ENCODE measurements at regions of chr1 and their contacts with region 1.

Region 1: GRCh38 chr1:188027613-188028012 is 1198.9 kb downstream of the PLA2G4A start:
- DNase-seq: peak; percentile 1 to 48
- H3K4me3 ChIP-seq: no peak overlapping the region
- H3K27ac ChIP-seq: no peak overlapping the region
- H3K4me1 ChIP-seq: peaks cover 4% of the 10 kb centered on the region; the same call in 1 of the 2 replicates
- H3K27me3 ChIP-seq: no peaks in the 10 kb centered on the region
- CTCF ChIP-seq: no peak

Region 2: GRCh38 chr1:187862554-187862953 is 165.1 kb before region 1 on chr1:
- CTCF ChIA-PET with region 1: no interaction called
- POLR2A ChIA-PET with region 1: no interaction called
- intact Hi-C with region 1: no loop called
- DNase-seq: peak in 1 of 2 experiments; percentile 41
- H3K4me3 ChIP-seq: no peak overlapping the region
- H3K27ac ChIP-seq: no peak overlapping the region
- H3K4me1 ChIP-seq: peaks cover 6% of the 10 kb centered on the region
- H3K27me3 ChIP-seq: no peaks in the 10 kb centered on the region
- CTCF ChIP-seq: no peak

Region 3: DNA sequence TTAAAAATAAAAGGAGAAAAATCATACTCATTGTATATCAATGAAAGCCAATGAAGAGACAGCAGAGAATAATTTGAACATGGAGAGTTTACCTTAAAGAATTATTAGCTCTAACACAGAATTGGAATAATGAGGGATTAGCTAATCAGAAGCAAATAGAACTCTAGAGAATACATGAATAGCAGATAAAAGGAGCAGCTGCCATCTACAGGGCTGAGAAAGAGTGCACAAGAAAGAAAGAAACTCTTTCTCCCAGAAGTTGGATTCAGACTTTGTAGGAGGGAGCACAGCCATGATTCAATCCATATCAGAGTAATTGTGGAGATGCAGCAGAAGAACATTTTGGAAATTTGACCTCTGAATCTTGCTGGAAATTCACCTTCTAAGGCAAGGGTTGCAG is 27.6 kb before region 1 on chr1:
- CTCF ChIA-PET with region 1: no interaction called
- POLR2A ChIA-PET with region 1: interaction called, 28 read pairs
- intact Hi-C with region 1: no loop called
- DNase-seq: no peak
- H3K4me3 ChIP-seq: no peak overlapping the region
- H3K27ac ChIP-seq: no peak overlapping the region
- H3K4me1 ChIP-seq: no peaks in the 10 kb centered on the region
- H3K27me3 ChIP-seq: no peaks in the 10 kb centered on the region
- CTCF ChIP-seq: no peak

Region 4: DNA sequence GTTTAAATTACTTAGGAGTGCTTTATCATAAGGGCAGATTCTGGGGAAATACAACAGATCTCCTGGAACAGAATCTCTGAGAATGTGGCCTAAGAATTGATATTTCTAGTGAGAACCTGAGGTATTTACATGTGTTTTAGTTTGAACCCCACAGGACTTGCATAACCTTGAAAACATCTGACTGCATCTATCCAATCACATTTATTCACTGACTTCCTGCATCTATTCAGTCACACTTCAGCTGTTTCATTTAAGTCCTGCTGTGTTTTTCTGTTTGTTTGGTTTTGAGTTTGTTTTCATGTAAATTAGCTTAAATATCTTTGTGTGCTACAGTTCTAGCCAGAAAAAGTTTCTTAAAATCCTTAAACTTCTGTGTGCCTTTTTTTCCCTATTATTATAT is 61.8 kb after region 1 on chr1:
- CTCF ChIA-PET with region 1: no interaction called
- POLR2A ChIA-PET with region 1: no interaction called
- intact Hi-C with region 1: no loop called
- DNase-seq: no peak
- H3K4me3 ChIP-seq: no peak overlapping the region
- H3K27ac ChIP-seq: no peak overlapping the region
- H3K4me1 ChIP-seq: no peaks in the 10 kb centered on the region
- H3K27me3 ChIP-seq: no peaks in the 10 kb centered on the region
- CTCF ChIP-seq: no peak

Measured in PC-9 (cell line).